ENCODE measurements at regions of chrX and their contacts with region 1.

Region 1: GRCh38 chrX:77962068-77962902 is 7.2 kb downstream of the PGAM4 start:
- DNase-seq: peak in 7 of 9 donors; percentile 7 to 39 (median 21)
- ATAC-seq: peak; percentile 68
- H3K4me3 ChIP-seq: peak overlapping the region; percentile 30
- H3K4me3 Mint-ChIP-seq: peak overlapping the region; percentile 1 to 89 (median 82)
- H3K27ac ChIP-seq: peak overlapping the region; percentile 55
- H3K27ac Mint-ChIP-seq: peak overlapping the region; percentile 84 to 95 (median 91)
- H3K4me1 ChIP-seq: no peaks in the 10 kb centered on the region
- H3K4me1 Mint-ChIP-seq: peaks cover 12 to 44% (median 32%) of the 10 kb centered on the region in 7 donors
- H3K27me3 ChIP-seq: no peaks in the 10 kb centered on the region
- H3K27me3 Mint-ChIP-seq: no peaks in the 10 kb centered on the region

Region 2: GRCh38 chrX:77519765-77520164 is 442.5 kb before region 1 on chrX:
- CTCF ChIA-PET with region 1: no interaction called
- POLR2A ChIA-PET with region 1: no interaction called
- intact Hi-C with region 1: loop called in 1 of 2 experiments (anchors 2 kb)
- DNase-seq: no peak
- ATAC-seq: no peak
- H3K4me3 ChIP-seq: no peak overlapping the region
- H3K4me3 Mint-ChIP-seq: no peak overlapping the region
- H3K27ac ChIP-seq: no peak overlapping the region
- H3K27ac Mint-ChIP-seq: no peak overlapping the region
- H3K4me1 ChIP-seq: no peaks in the 10 kb centered on the region
- H3K4me1 Mint-ChIP-seq: peaks cover 0 to 10% (median 0%) of the 10 kb centered on the region in 7 donors
- H3K27me3 ChIP-seq: no peaks in the 10 kb centered on the region
- H3K27me3 Mint-ChIP-seq: no peaks in the 10 kb centered on the region

Region 3: DNA sequence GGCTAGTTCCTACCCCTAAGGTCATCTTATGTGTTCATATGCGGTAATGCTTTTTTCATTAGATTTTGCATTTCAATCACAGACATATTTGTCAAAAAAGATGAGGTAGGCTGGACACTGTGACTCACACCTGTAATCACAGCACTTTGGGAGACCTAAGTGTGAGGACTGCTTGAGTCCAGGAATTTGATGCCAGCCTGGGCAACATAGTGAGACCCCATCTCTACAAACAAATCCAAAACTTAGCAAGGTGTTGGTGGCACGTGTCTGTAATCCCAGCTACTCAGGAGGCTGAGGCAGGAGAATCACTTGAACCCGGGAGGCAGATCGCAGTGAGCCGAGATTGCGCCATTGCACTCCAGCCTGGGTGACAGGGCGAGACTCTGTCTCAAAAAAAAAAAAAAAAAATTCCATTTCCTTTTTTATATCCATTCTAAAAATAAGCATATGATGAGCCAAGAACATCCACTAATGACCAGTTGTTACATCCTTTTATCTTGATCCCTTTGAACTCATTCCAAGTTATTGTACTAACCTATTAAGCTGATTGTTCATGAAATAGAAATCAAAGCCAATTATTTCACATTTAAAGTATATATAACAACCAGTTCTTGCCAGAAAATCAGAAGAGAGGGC is 16.3 kb before region 1 on chrX:
- CTCF ChIA-PET with region 1: no interaction called
- POLR2A ChIA-PET with region 1: interaction called, 5 read pairs
- intact Hi-C with region 1: loop called in 1 of 2 experiments (anchors 2 kb)
- DNase-seq: no peak
- ATAC-seq: no peak
- H3K4me3 ChIP-seq: no peak overlapping the region
- H3K4me3 Mint-ChIP-seq: no peak overlapping the region
- H3K27ac ChIP-seq: no peak overlapping the region
- H3K27ac Mint-ChIP-seq: no peak overlapping the region
- H3K4me1 ChIP-seq: no peaks in the 10 kb centered on the region
- H3K4me1 Mint-ChIP-seq: peaks cover 0 to 18% (median 8%) of the 10 kb centered on the region in 7 donors
- H3K27me3 ChIP-seq: no peaks in the 10 kb centered on the region
- H3K27me3 Mint-ChIP-seq: no peaks in the 10 kb centered on the region